Activated CD4-positive, alpha-beta T cell treated with anti-CD3 and anti-CD28 coated beads, Interleukin-2, amount 10 ng/mL, durations not matched to agents 24 days and 14 days (primary cell): ENCODE measurements at regions of chr5 and their contacts with region 1.

Region 1: DNA sequence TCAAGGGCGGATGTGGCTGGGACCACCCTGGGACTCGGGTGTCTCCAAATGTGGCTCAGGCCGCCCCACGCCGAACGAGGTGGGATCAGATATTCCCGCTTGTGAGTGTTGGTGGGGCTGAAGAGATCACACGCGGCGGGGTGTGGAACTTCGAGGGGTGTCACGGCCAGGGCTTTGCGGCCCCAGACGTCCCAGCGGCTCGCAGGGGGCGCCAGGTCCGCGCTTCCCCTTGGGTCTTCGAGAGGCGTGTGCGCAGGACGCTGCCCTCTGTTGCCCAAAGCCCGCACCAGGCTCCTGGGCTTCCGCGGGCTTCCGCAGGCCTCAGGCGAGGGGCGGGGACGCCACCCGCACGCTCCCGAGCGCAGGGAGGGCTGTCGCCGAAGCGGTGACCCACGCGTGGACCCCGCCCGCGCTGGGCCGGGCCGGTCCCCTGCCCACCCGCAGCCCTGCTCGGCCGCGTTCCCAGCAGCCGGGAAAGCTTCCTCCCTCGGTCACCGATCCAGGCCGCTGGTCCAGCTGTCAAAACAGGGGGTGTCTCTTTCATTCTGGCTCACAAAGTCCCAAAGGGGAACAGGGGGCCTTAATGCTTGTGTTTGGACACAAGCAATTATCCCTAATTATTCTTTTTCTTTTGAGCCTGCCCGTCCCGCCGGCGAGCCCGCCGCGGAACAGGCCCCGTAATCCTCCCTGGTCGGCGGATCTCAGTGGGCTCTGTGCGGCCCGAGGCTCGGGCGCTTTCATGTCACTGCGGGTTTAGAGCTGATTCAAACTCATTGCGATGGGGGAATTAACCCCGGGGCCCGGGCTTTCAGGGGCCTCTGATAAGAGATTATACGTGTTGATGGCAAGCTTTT is 60.6 kb downstream of the TMEM174 start:
- DNase-seq: no peak
- H3K4me3 Mint-ChIP-seq: no peak overlapping the region
- H3K27ac Mint-ChIP-seq: no peak overlapping the region
- H3K4me1 Mint-ChIP-seq: no peaks in the 10 kb centered on the region
- H3K27me3 Mint-ChIP-seq: peaks cover 70% of the 10 kb centered on the region

Region 2: GRCh38 chr5:73303148-73304079 is 69.8 kb after region 1 on chr5:
- intact Hi-C with region 1: loop called (anchors 2 kb)
- DNase-seq: no peak
- H3K4me3 Mint-ChIP-seq: no peak overlapping the region
- H3K27ac Mint-ChIP-seq: no peak overlapping the region
- H3K4me1 Mint-ChIP-seq: no peaks in the 10 kb centered on the region
- H3K27me3 Mint-ChIP-seq: peaks cover 81% of the 10 kb centered on the region